Caco-2 (cell line): ENCODE measurements at regions of chr11 and their contacts with region 1.

Region 1: GRCh38 chr11:82900277-82901164 is at the start of gene PRCP:
- DNase-seq: peak; percentile 99
- H3K4me3 ChIP-seq: peak within 1 kb of the TSS; percentile 63
- H3K4me3 Mint-ChIP-seq: peak within 1 kb of the TSS; percentile 93
- H3K27ac Mint-ChIP-seq: peak within 1 kb of the TSS; percentile 95
- H3K4me1 ChIP-seq: peaks cover 4% of the 10 kb centered on the region; the same call in 1 of the 2 replicates
- H3K4me1 Mint-ChIP-seq: peaks cover 40% of the 10 kb centered on the region
- H3K27me3 ChIP-seq: no peaks in the 10 kb centered on the region
- H3K27me3 Mint-ChIP-seq: no peaks in the 10 kb centered on the region
- CTCF ChIP-seq: no peak
- total RNA-seq, gene PRCP: 107 TPM in 2 replicates

Region 2: DNA sequence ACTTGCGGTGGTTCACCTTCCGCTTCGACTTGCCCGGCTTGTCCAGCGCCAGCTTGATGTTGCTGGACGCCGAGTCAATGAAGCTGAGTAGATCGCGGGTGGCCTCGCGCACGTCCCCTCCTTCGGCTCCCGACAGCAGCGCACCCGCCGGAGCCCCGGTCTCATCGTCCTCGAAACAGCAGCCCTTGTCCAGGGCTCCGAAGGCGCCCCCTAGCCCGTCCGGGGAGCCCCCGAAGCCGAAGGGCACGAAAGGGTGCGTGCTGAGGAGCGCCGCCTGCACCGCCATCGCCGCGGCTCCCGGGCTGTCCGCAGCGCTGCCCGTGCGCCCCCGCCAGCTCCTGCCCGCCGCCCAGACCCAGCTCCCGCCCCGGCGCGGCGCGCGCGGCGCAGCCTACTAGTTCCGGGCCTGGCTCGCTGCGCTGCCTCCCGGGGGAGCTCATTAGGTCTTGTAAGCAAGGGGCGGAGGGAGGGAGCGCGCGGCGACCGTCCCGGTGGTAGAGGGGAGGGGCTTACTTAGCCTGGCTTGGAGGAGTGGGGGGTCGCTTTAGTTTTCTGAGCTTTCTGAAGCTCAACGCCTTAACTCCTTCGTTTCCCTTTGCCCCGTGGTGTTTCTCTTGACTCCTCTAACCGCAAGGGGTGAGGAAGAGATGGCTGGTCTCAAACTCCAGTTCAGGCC is 166.9 kb before region 1 on chr11 and contains the start of gene FAM181B:
- CTCF ChIA-PET with region 1: no interaction called
- POLR2A ChIA-PET with region 1: interaction called, 3 read pairs
- intact Hi-C with region 1: loop called (anchors 1 kb)
- DNase-seq: peak; percentile 61 to 72
- H3K4me3 ChIP-seq: peak within 1 kb of the TSS; percentile 51
- H3K4me3 Mint-ChIP-seq: peak within 1 kb of the TSS; percentile 73
- H3K27ac Mint-ChIP-seq: no peak within 1 kb of the TSS
- H3K4me1 ChIP-seq: peaks cover 13% of the 10 kb centered on the region; the same call in 1 of the 2 replicates
- H3K4me1 Mint-ChIP-seq: no peaks in the 10 kb centered on the region
- H3K27me3 ChIP-seq: peaks cover 7% of the 10 kb centered on the region
- H3K27me3 Mint-ChIP-seq: peaks cover 50% of the 10 kb centered on the region
- CTCF ChIP-seq: no peak
- total RNA-seq, gene FAM181B: not detected in 2 replicates

Region 3: GRCh38 chr11:82867495-82868082 is 32.9 kb before region 1 on chr11:
- CTCF ChIA-PET with region 1: interaction called, 68 read pairs
- POLR2A ChIA-PET with region 1: interaction called, 6 read pairs
- intact Hi-C with region 1: loop called (anchors 1 kb)
- DNase-seq: peak; percentile 84 to 89
- H3K4me3 ChIP-seq: no peak overlapping the region
- H3K4me3 Mint-ChIP-seq: no peak overlapping the region
- H3K27ac Mint-ChIP-seq: no peak overlapping the region
- H3K4me1 ChIP-seq: no peaks in the 10 kb centered on the region
- H3K4me1 Mint-ChIP-seq: no peaks in the 10 kb centered on the region
- H3K27me3 ChIP-seq: no peaks in the 10 kb centered on the region
- H3K27me3 Mint-ChIP-seq: no peaks in the 10 kb centered on the region
- CTCF ChIP-seq: peak; percentile 75 to 95

Region 4: GRCh38 chr11:82927254-82927880 is 26.8 kb after region 1 on chr11:
- CTCF ChIA-PET with region 1: interaction called, 13 read pairs
- POLR2A ChIA-PET with region 1: no interaction called
- intact Hi-C with region 1: no loop called
- DNase-seq: peak in 1 of 2 experiments; percentile 67
- H3K4me3 ChIP-seq: no peak overlapping the region
- H3K4me3 Mint-ChIP-seq: no peak overlapping the region
- H3K27ac Mint-ChIP-seq: no peak overlapping the region
- H3K4me1 ChIP-seq: no peaks in the 10 kb centered on the region
- H3K4me1 Mint-ChIP-seq: peaks cover 11% of the 10 kb centered on the region
- H3K27me3 ChIP-seq: no peaks in the 10 kb centered on the region
- H3K27me3 Mint-ChIP-seq: no peaks in the 10 kb centered on the region
- CTCF ChIP-seq: peak; percentile 87 to 88

Region 5: DNA sequence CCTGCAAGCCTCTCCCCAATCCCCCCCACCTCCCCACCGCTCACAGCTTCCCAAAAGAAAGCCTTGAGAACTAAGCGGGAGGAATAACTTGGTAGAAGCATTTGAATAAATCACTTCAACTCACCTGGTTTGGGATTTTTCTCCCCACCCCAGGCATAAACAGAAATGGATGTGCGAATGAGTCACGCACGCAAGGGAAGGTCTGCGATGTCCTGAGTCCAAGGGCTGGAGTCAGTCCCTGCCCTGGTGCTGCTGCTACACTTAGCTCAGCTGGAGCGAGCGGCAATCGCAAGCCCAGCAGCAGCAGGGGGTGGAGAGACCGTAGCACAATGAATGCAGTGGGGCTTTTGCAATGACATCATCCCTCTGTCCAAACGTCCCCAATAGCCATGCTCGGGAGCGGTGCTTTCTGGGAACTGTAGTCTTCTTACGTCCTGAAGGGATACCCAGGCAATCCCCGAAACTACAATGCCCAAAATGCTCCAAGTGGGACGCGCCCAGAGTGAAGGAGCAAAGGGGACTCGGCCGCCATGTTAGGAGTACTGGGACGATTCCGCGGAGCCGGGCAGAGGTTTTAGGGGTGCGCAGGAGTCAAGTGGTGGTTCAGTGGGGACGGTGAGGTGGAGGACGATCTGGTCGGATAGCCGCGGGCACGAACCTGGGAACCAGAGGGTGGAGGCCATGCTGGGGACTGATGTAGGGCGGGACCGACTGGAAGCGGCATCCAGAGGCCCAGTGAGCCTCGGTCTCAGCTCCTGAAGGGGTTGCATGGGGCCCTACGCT is 171.2 kb after region 1 on chr11 and contains the start of gene RAB30:
- CTCF ChIA-PET with region 1: interaction called, 10 read pairs
- POLR2A ChIA-PET with region 1: interaction called, 19 read pairs
- intact Hi-C with region 1: loop called (anchors 1 kb)
- DNase-seq: peak; percentile 99 to 100
- H3K4me3 ChIP-seq: peak within 1 kb of the TSS; percentile 62
- H3K4me3 Mint-ChIP-seq: no peak within 1 kb of the TSS
- H3K27ac Mint-ChIP-seq: no peak within 1 kb of the TSS
- H3K4me1 ChIP-seq: peaks cover 33% of the 10 kb centered on the region
- H3K4me1 Mint-ChIP-seq: peaks cover 26% of the 10 kb centered on the region
- H3K27me3 ChIP-seq: no peaks in the 10 kb centered on the region
- H3K27me3 Mint-ChIP-seq: no peaks in the 10 kb centered on the region
- CTCF ChIP-seq: no peak
- total RNA-seq, gene RAB30: 13.0 and 13.5 TPM in 2 replicates

Region 6: DNA sequence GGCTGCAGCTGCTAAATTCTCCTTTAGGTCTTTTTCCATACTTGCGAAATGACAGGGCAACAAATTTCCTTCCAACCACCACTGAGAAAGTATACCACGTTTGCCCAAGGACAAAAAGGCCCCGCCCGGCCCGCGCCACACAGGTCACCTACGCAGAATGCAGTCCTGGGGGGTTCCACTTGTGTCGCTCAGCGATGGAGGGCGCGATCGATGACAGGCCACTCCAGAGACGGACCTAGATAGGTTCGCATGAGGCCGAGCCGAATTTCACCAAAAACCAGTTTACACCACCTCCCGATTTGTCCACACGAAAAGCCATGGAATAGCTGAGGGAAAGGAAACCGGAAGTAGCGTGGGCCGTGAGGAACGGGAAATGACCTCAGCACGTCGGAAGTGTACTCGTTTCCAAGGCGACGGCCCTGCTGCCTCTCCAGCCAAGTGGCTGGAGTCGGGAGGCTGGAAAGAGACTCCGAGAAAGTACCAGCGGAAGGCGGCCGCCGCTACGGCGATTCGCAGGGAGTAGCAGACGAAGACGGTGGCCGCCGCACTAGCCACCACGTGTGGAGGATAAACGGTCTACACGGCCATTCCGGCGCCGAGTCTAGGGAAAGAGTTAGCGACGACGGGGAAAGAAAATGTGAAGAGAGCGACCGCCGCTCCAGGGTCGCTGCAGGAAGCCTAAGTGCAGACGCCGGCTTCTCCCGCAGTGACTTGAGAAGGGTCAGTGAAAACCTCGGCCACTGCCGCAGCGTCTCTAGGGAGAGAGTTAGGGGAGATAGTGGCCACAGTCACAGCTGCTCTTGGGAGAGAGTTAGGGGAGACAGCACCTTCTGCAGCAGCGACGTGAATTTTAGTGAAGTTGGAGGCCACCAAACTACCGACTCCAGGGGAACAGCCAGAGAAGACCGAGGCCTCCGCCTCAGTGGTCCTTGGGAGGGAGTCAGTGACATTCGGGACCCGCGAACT is 293.1 kb after region 1 on chr11 and contains the start of gene ANKRD42:
- CTCF ChIA-PET with region 1: no interaction called
- POLR2A ChIA-PET with region 1: interaction called, 6 read pairs
- intact Hi-C with region 1: loop called (anchors 1 kb)
- DNase-seq: peak; percentile 96 to 97
- H3K4me3 ChIP-seq: peak within 1 kb of the TSS; percentile 77
- H3K4me3 Mint-ChIP-seq: peak within 1 kb of the TSS; percentile 80
- H3K27ac Mint-ChIP-seq: peak within 1 kb of the TSS; percentile 89
- H3K4me1 ChIP-seq: peaks cover 7% of the 10 kb centered on the region; the same call in 1 of the 2 replicates
- H3K4me1 Mint-ChIP-seq: peaks cover 30% of the 10 kb centered on the region
- H3K27me3 ChIP-seq: no peaks in the 10 kb centered on the region
- H3K27me3 Mint-ChIP-seq: no peaks in the 10 kb centered on the region
- CTCF ChIP-seq: peak in 1 of 2 experiments; percentile 4
- total RNA-seq, gene ANKRD42: 8.3 and 9.0 TPM in 2 replicates